IMR-90 (cell line): ENCODE measurements at regions of chr2 and their contacts with region 1.

Region 1: GRCh38 chr2:167196461-167197252 is 308.4 kb downstream of the XIRP2 start:
- DNase-seq: peak; percentile 59
- ATAC-seq: no peak; the same call in 1 of the 2 replicates
- H3K4me3 ChIP-seq: no peak overlapping the region
- H3K27ac ChIP-seq: no peak overlapping the region
- H3K4me1 ChIP-seq: peaks cover 3% of the 10 kb centered on the region; the same call in 1 of the 2 replicates
- H3K27me3 ChIP-seq: no peaks in the 10 kb centered on the region
- CTCF ChIP-seq: no peak
- POLR2A ChIP-seq: no peak
- RAD21 ChIP-seq: no peak

Region 2: GRCh38 chr2:166917415-166917814 is 279.2 kb before region 1 on chr2:
- CTCF ChIA-PET with region 1: no interaction called
- POLR2A ChIA-PET with region 1: no interaction called
- dilution Hi-C with region 1: no loop called
- in situ Hi-C with region 1: no loop called
- intact Hi-C with region 1: loop called (anchors 5 kb)
- DNase-seq: peak; percentile 15
- ATAC-seq: peak; percentile 35; the same call in 1 of the 2 replicates
- H3K4me3 ChIP-seq: no peak overlapping the region
- H3K27ac ChIP-seq: no peak overlapping the region
- H3K4me1 ChIP-seq: no peaks in the 10 kb centered on the region
- H3K27me3 ChIP-seq: no peaks in the 10 kb centered on the region
- CTCF ChIP-seq: no peak
- POLR2A ChIP-seq: no peak
- RAD21 ChIP-seq: no peak

Region 3: DNA sequence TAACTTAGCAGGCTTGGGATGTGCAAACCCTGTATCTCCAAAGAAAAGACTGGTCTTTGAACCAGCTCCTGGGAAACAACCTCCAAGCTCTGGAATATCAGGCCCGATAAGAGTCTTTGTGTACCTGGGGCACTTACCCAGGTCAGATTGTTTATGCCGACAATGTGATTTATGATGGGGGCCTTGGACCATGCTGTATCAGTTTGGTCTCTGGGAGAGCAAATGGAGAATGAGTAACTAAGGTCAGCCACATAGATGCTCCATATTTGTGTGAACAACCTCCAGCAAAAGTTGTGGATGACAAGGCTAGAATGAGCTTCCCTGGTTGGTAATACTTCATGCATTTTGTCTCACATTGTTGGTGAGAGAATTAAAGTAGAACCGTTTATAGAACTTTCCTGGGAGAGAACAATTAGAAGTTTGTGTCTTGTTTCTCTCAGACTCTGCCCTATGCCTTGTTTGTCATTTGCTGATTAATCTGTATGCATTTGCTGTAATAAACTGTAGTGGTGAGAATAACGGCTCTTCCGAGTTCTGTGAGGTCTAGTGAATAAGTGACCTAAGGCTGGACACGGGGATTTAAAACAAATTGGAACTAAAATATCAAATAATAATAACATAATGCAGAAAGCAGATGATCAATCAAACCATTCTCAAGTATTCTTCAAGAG is 49.3 kb before region 1 on chr2:
- CTCF ChIA-PET with region 1: no interaction called
- POLR2A ChIA-PET with region 1: no interaction called
- dilution Hi-C with region 1: no loop called
- in situ Hi-C with region 1: no loop called
- intact Hi-C with region 1: loop called (anchors 5 kb)
- DNase-seq: no peak
- ATAC-seq: no peak
- H3K4me3 ChIP-seq: no peak overlapping the region
- H3K27ac ChIP-seq: no peak overlapping the region
- H3K4me1 ChIP-seq: peaks cover 1% of the 10 kb centered on the region; the same call in 1 of the 2 replicates
- H3K27me3 ChIP-seq: no peaks in the 10 kb centered on the region
- CTCF ChIP-seq: no peak
- POLR2A ChIP-seq: no peak
- RAD21 ChIP-seq: no peak

Region 4: DNA sequence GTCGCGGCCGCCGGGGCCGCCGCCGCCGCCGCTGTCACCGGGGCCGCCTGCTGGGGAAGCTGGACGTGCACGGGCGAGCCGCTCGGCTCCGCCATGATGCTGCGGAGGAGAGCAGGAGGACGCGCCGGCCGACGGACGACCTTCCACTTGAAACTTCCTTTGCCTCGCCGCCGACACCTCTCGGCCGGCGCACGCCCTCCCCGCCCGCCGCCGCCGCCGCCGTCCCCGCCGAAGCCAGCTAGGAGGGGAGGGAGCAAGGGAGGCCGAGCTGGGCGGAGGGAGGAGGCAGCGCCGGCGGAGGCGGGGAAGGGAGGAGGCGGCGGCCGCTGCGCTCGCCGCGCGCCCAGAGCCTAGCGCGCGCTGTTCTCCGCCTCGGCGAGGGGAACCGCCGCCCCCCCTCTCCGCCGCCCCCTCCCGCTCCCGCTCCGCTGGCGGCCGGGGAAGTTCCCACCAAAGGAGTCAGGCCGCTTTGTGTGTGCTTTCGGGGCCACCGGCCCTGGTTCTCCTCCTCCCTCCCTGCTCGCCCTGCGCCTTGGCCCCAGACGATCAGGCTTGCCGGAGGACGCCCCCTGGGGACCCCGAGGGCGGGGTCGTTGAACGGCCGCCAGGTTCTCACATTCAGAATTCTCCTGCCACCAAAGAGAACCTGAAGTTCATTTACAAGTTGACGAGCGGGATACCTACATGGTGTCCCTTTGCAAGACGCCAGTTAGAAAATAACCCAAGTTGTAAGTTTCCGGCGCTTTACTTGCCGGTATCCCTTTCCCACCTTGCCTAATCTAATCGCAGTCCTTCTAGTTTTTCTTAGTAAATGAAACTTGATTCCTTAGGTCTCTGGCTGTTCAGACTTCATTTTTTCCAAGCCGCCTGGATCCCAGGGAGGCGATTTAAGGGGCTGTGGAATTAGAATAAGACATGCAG is 1050.9 kb after region 1 on chr2 and contains the start of gene STK39:
- CTCF ChIA-PET with region 1: no interaction called
- POLR2A ChIA-PET with region 1: no interaction called
- dilution Hi-C with region 1: no loop called
- in situ Hi-C with region 1: no loop called
- intact Hi-C with region 1: no loop called
- DNase-seq: peak; percentile 73
- ATAC-seq: peak; percentile 90
- H3K4me3 ChIP-seq: peak within 1 kb of the TSS; percentile 77
- H3K27ac ChIP-seq: peak within 1 kb of the TSS; percentile 91
- H3K4me1 ChIP-seq: peaks cover 9% of the 10 kb centered on the region
- H3K27me3 ChIP-seq: no peaks in the 10 kb centered on the region
- CTCF ChIP-seq: 0 out of 2 replicates have a peak, but pooled peaks have one; percentile 5
- POLR2A ChIP-seq: no peak
- RAD21 ChIP-seq: no peak
- total RNA-seq, gene STK39: 11.8 and 25.8 TPM in 2 replicates